SK-N-SH (cell line): ENCODE measurements at regions of chr10 and their contacts with region 1.

Region 1: GRCh38 chr10:96374985-96375830 is 16.4 kb upstream of the OPALIN start:
- DNase-seq: peak; percentile 94
- H3K4me3 ChIP-seq: peak overlapping the region; percentile 44 to 56
- H3K27ac ChIP-seq: no peak overlapping the region
- H3K4me1 ChIP-seq: peaks cover 0 to 9% of the 10 kb centered on the region in 2 experiments; a peak in 1 of 4 replicates
- H3K27me3 ChIP-seq: no peaks in the 10 kb centered on the region
- CTCF ChIP-seq: peak; percentile 90
- EP300 ChIP-seq: no peak
- RAD21 ChIP-seq: peak; percentile 95

Region 2: DNA sequence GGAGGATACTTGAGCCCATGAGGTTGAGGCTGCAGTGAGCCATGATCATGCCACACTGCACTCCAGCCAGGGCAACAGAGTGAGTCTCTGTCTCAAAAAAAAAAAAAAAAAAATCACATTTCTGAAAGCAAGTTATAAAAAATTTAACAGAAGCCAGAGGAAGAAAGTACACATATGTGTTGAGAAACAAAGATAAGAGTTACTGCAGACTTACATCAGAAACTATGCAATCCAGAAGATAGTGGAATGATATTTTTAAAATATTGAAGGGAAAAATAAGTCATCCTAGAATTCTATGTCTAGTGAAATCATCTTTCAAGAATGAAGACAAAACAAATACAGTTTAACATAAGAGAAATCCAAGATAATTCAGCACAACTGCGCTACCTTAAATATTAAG is 198.2 kb before region 1 on chr10:
- CTCF ChIA-PET with region 1: no interaction called
- POLR2A ChIA-PET with region 1: no interaction called
- DNase-seq: no peak
- H3K4me3 ChIP-seq: no peak overlapping the region
- H3K27ac ChIP-seq: no peak overlapping the region
- H3K4me1 ChIP-seq: no peaks in the 10 kb centered on the region
- H3K27me3 ChIP-seq: no peaks in the 10 kb centered on the region
- CTCF ChIP-seq: no peak
- EP300 ChIP-seq: no peak
- RAD21 ChIP-seq: no peak

Region 3: DNA sequence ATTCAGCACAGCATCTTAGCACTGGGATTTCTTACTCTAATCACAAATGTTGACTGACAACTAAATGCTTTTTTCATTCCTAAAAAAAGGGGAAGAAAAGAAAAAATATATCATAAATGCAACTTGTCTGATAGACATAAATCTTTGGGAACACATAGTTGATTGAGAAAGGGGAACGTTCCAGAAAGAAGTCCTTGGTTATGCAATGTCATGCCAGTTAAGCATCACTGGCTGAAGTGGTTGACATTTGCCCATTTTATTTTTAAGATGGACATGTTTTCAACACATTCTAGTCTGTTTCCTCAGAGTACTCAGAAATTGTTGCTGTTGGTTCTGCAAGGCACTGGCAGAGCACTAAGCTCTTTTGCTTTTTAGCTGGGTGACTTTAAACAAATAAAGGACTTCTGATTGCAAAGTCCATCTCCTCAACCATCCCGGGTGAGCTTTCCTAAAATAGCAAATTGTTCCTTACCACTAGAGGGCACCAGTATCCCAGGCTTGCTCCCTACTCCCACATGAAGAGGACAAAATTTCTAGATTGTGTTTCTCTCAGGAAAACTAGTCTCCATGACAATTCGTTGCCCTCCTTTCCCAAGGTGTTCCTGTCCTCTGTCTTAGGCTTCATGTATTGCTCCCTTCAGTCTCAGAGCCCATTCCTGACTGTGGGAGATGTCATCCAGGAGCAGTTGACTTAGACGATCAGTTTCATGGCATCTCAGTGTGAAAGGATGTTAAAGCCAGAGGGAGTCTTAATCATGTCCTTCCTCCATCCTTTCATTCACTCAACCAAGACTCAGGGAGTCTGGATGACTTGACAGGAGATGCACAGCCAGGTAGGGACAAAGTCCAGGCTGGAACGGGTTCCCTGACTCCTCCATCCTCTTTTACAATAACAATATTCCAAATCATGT is 40.3 kb before region 1 on chr10:
- CTCF ChIA-PET with region 1: interaction called, 10 read pairs
- POLR2A ChIA-PET with region 1: no interaction called
- DNase-seq: peak; percentile 47
- H3K4me3 ChIP-seq: no peak overlapping the region; a peak in 1 of 4 replicates
- H3K27ac ChIP-seq: no peak overlapping the region
- H3K4me1 ChIP-seq: no peaks in the 10 kb centered on the region
- H3K27me3 ChIP-seq: no peaks in the 10 kb centered on the region; the same call in 1 of the 2 replicates
- CTCF ChIP-seq: peak; percentile 78
- EP300 ChIP-seq: no peak
- RAD21 ChIP-seq: peak; percentile 57

Region 4: DNA sequence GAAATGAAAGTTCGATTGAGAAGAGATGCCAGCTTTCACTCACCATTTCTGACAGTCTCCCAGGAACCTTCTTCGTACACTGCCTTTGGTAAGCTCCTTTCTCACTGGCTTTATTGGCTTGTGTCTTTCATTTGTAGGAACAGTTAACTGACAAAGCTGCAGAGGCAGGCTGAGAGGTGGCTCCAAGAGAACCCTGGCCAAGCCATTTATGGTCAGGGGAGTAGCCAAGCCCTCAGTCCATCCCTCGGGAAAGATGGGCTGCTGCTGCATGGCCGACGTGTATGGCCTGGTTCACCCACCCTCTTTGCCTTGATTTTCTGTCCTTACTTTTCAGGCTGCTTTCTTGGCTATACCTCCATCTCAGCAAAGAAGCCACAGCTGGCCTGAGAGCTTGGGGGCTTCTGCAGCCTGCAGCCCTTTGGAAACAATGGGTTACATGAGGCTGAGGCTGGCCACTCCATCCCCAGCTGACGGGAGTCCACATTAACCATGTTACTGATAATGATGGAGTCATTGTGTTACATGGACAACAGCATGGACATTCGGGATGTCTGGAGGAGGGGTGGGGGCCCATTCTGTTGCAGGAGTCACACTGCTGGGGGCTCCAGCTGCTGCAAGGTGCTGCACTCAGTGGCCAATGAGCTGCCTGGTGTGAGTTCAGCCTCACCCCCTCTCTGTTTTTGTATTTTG is 16.2 kb before region 1 on chr10 and contains the start of gene OPALIN:
- CTCF ChIA-PET with region 1: interaction called, 32 read pairs
- POLR2A ChIA-PET with region 1: no interaction called
- DNase-seq: no peak
- H3K4me3 ChIP-seq: no peak within 1 kb of the TSS
- H3K27ac ChIP-seq: no peak within 1 kb of the TSS
- H3K4me1 ChIP-seq: no peaks in the 10 kb centered on the region
- H3K27me3 ChIP-seq: peaks cover 4% of the 10 kb centered on the region; the same call in 1 of the 2 replicates
- CTCF ChIP-seq: no peak
- EP300 ChIP-seq: no peak
- RAD21 ChIP-seq: no peak
- polyA plus RNA-seq, gene OPALIN: not detected in 2 replicates

Region 5: GRCh38 chr10:96395931-96396877 is 21.0 kb after region 1 on chr10:
- CTCF ChIA-PET with region 1: interaction called, 38 read pairs
- POLR2A ChIA-PET with region 1: no interaction called
- DNase-seq: peak; percentile 87
- H3K4me3 ChIP-seq: no peak overlapping the region
- H3K27ac ChIP-seq: no peak overlapping the region
- H3K4me1 ChIP-seq: no peaks in the 10 kb centered on the region; a peak in 1 of 4 replicates
- H3K27me3 ChIP-seq: peaks cover 25% of the 10 kb centered on the region; the same call in 1 of the 2 replicates
- CTCF ChIP-seq: peak; percentile 90
- EP300 ChIP-seq: no peak
- RAD21 ChIP-seq: peak; percentile 88

Region 6: DNA sequence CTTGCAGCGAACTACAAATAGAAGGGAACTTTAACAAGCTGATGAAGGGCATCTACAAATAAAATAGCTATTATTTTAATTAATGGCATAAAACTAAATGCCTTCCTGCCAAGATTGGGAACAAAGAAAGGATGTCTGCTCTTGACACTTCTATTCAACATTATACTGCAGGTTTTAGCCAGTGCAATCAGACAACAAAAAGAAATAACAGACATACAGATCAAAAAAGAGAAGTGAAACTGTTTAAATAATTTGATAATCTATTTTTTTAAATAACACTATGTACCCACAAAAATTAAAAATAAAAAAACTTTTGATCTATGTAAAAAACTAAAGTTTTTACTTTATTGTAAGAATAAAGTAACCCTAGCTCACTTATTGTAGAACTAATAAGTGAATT is 160.9 kb after region 1 on chr10:
- CTCF ChIA-PET with region 1: interaction called, 15 read pairs
- POLR2A ChIA-PET with region 1: no interaction called
- DNase-seq: no peak
- H3K4me3 ChIP-seq: no peak overlapping the region
- H3K27ac ChIP-seq: no peak overlapping the region
- H3K4me1 ChIP-seq: peaks cover 5 to 7% of the 10 kb centered on the region in 2 experiments
- H3K27me3 ChIP-seq: no peaks in the 10 kb centered on the region
- CTCF ChIP-seq: no peak
- EP300 ChIP-seq: no peak
- RAD21 ChIP-seq: no peak